Esophagus muscularis mucosa (tissue), 4 donors: ENCODE measurements at regions of chrX and their contacts with region 1.

Region 1: DNA sequence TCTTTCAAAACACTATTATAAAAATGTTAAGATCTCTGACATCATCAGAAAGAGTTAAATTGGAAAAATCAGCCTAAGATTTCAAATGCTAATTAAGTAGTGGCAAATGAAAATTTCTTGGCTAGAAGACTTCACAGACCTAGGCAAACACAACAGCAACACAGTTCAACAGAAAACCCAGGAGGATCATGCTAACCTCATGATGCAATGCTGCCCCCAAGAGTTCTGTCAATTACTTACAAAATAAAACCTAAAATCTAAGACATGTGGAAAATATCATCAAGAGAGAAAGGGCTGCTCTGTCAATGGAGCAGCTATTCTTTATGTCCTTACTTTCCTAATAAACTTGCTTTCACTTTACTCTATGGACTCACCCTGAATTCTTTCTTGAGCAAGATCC is 21.0 kb downstream of the S100G start:
- DNase-seq: no peak
- H3K4me3 ChIP-seq: no peak overlapping the region
- H3K27ac ChIP-seq: no peak overlapping the region
- H3K4me1 ChIP-seq: no peaks in the 10 kb centered on the region
- H3K27me3 ChIP-seq: no peaks in the 10 kb centered on the region
- CTCF ChIP-seq: peak in 2 of 3 experiments; percentile 20 to 27
- EP300 ChIP-seq: no peak
- POLR2A ChIP-seq: no peak

Region 2: GRCh38 chrX:16436348-16437188 is 234.4 kb before region 1 on chrX:
- intact Hi-C with region 1: loop called (anchors 10 kb)
- DNase-seq: no peak
- H3K4me3 ChIP-seq: no peak overlapping the region
- H3K27ac ChIP-seq: no peak overlapping the region
- H3K4me1 ChIP-seq: no peaks in the 10 kb centered on the region
- H3K27me3 ChIP-seq: no peaks in the 10 kb centered on the region
- CTCF ChIP-seq: peak; percentile 54 to 61 (median 60)
- EP300 ChIP-seq: no peak
- POLR2A ChIP-seq: no peak

Region 3: GRCh38 chrX:16451334-16451733 is 219.7 kb before region 1 on chrX:
- intact Hi-C with region 1: loop called (anchors 10 kb)
- DNase-seq: no peak
- H3K4me3 ChIP-seq: no peak overlapping the region
- H3K27ac ChIP-seq: no peak overlapping the region
- H3K4me1 ChIP-seq: no peaks in the 10 kb centered on the region
- H3K27me3 ChIP-seq: no peaks in the 10 kb centered on the region
- CTCF ChIP-seq: no peak
- EP300 ChIP-seq: no peak
- POLR2A ChIP-seq: no peak

Region 4: GRCh38 chrX:16491461-16491860 is 179.5 kb before region 1 on chrX:
- intact Hi-C with region 1: no loop called
- DNase-seq: no peak
- H3K4me3 ChIP-seq: no peak overlapping the region
- H3K27ac ChIP-seq: no peak overlapping the region
- H3K4me1 ChIP-seq: no peaks in the 10 kb centered on the region
- H3K27me3 ChIP-seq: no peaks in the 10 kb centered on the region
- CTCF ChIP-seq: no peak
- EP300 ChIP-seq: no peak
- POLR2A ChIP-seq: no peak